ENCODE measurements at regions of chr6 and their contacts with region 1.

Region 1: DNA sequence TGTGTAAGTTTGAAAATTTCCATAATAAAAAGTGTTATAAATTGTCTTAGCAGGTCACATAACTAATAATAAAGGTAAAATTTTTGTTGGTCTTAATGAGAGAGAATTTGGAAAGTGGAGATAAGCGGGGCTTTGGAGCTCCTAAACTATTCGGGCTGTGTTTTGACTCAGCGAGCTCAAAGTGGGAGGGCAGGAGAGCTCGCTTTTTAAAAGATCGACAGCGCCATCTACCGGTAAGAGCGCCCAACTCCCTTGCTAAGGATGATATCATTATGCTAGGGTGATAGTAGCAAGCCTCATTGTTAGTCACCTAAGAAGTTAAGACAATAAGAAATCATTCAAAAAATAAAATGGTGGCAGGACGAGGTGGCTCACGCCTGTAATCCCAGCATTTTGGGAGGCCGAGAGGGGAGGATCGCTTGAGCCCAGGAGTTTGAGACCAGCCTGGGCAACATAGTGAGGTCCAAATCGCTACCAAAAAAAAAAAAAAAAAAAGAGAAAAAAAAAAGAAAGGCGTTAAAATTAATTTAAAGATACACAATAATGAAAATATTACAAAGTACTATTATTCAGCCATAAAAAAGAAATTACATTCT is 24.8 kb downstream of the C6orf15 start:
- DNase-seq: peak; percentile 25
- ATAC-seq: peak; percentile 98
- H3K4me3 ChIP-seq: no peak overlapping the region
- H3K27ac ChIP-seq: no peak overlapping the region
- H3K4me1 ChIP-seq: no peaks in the 10 kb centered on the region
- H3K27me3 ChIP-seq: no peaks in the 10 kb centered on the region; a peak in 1 of 4 replicates
- CTCF ChIP-seq: peak; percentile 67 to 72 (median 71)
- EP300 ChIP-seq: no peak
- POLR2A ChIP-seq: no peak
- RAD21 ChIP-seq: peak; percentile 71

Region 2: DNA sequence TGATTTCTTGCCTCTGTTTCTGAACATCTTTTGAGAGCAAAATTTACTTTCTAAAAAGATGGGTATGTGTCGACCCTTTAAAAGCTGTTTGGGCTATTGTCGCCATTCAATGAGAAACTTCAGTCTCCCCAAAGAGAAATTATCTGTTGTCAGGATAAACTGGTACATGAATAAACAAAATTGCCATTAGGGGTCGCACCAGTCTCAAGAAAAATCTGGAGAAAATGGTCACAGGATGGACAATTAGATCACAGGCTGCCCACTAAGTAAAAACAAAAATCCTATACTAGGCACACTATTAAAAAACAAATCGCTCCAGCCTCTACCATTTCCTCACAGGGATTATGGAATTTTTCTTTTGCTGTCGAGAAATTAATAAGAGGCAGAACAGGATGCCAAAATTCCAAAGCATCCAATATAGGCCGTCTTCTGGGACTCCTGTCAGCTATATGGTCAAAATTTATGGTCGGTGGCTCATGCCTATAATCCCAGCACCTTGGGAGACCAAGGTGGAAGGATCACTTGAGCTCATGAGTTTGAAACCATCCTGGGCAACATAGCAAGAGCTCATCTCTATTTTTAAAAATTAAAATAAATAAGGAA is 603.8 kb before region 1 on chr6:
- CTCF ChIA-PET with region 1: interaction called, 14 read pairs
- POLR2A ChIA-PET with region 1: no interaction called
- RAD21 ChIA-PET with region 1: interaction called, 9 read pairs
- SMC1A ChIA-PET with region 1: interaction called, 4 read pairs
- in situ Hi-C with region 1: no loop called
- intact Hi-C with region 1: loop called (anchors 10 kb)
- DNase-seq: peak; percentile 37
- ATAC-seq: peak; percentile 48
- H3K4me3 ChIP-seq: no peak overlapping the region
- H3K27ac ChIP-seq: no peak overlapping the region
- H3K4me1 ChIP-seq: peaks cover 12% of the 10 kb centered on the region; the same call in 1 of the 2 replicates
- H3K27me3 ChIP-seq: peaks cover 2 to 8% of the 10 kb centered on the region in 2 experiments; a peak in 3 of 4 replicates
- CTCF ChIP-seq: peak; percentile 47 to 73 (median 56); a peak in 5 of 6 replicates
- EP300 ChIP-seq: no peak
- POLR2A ChIP-seq: no peak
- RAD21 ChIP-seq: peak; percentile 90

Region 3: DNA sequence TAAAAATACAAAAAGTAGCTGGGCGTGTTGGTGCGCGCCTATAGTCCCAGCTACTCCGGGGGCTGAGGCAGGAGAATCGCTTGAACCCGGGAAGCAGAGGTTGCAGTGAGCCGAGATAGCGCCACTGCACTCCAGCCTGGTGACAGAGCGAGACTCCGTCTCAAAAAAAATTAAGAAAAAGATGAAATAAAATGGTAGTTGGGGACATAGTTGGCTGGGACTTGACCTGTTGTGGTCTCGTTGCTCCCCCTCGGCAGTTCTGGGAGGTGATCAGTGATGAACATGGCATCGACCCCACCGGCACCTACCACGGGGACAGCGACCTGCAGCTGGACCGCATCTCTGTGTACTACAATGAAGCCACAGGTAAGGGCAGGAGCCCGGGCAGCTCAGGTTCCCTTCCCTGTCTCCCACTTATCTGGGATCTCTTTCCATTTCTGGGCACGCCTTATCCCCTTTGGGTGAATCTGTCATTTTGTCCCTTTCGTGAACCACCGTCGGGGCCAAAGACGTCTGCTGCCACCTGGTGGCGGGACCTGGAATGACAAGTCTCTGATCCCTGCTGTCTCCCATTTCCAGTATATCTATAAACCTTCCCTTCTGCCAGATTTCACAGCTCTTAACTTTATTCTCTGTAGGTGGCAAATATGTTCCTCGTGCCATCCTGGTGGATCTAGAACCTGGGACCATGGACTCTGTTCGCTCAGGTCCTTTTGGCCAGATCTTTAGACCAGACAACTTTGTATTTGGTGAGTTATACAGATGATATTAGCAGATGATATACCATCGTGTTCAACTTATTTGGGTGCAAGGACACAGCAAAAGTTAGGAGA is 365.1 kb before region 1 on chr6:
- CTCF ChIA-PET with region 1: no interaction called
- POLR2A ChIA-PET with region 1: no interaction called
- RAD21 ChIA-PET with region 1: interaction called, 3 read pairs
- SMC1A ChIA-PET with region 1: interaction called, 3 read pairs
- in situ Hi-C with region 1: no loop called
- intact Hi-C with region 1: loop called (anchors 5 kb)
- DNase-seq: no peak
- ATAC-seq: 0 out of 3 replicates have a peak, but pooled peaks have one; percentile 0
- H3K4me3 ChIP-seq: peak overlapping the region; percentile 88
- H3K27ac ChIP-seq: peak overlapping the region; percentile 67
- H3K4me1 ChIP-seq: peaks cover 12% of the 10 kb centered on the region
- H3K27me3 ChIP-seq: no peaks in the 10 kb centered on the region
- CTCF ChIP-seq: peak; percentile 90 to 95 (median 92)
- EP300 ChIP-seq: no peak
- POLR2A ChIP-seq: no peak; the same call in 1 of the 2 replicates
- RAD21 ChIP-seq: peak; percentile 86

Region 4: DNA sequence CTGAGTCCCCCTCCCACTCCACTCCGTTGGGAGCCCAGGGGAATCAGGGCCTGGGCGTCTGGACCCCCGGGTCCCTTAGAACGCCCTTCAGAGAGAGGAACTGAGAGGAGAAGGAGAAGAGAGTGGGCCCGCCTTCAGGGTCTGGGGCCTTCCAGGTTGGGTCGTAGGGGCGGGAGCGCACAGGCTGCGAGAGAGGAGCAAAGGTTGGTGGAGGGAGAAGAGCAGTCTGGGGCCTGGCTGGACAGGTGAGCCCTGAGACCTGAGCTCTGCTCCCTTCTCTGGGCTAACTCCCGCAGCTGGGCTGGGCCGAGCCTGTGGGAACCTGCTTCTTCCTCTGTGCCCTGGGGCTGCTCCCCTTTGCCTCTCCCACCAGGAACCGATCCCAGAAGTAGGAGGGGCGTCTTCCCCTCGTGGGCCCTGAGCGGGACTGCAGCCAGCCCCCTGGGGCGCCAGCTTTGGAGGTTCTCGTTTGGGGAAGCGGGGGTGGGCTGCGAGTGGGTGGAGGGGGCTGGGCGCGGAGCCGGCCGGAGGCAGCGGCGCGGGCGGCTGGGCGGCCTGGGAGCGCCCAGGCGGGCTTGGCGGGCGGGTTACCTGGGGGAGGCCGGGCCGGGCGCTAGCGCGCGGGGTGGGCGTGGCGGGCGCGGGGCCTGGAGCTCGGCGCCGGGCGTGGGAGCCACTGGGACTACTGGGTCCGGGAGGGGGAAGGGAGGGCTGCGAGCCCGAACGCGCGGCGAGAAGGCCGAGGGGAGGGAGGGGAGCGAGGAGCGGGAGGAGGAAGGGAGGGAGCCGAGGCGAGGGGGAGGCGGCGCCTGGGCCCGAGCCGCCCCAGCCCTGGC is 203.7 kb before region 1 on chr6 and contains the start of gene DDR1:
- CTCF ChIA-PET with region 1: interaction called, 11 read pairs
- POLR2A ChIA-PET with region 1: no interaction called
- RAD21 ChIA-PET with region 1: interaction called, 5 read pairs
- SMC1A ChIA-PET with region 1: interaction called, 4 read pairs
- in situ Hi-C with region 1: no loop called
- intact Hi-C with region 1: no loop called
- DNase-seq: no peak
- ATAC-seq: peak; percentile 65
- H3K4me3 ChIP-seq: peak within 1 kb of the TSS; percentile 75
- H3K27ac ChIP-seq: peak within 1 kb of the TSS; percentile 81
- H3K4me1 ChIP-seq: peaks cover 38% of the 10 kb centered on the region
- H3K27me3 ChIP-seq: no peaks in the 10 kb centered on the region
- CTCF ChIP-seq: no peak
- EP300 ChIP-seq: no peak
- POLR2A ChIP-seq: peak; percentile 18; the same call in 1 of the 2 replicates
- RAD21 ChIP-seq: no peak
- polyA plus RNA-seq, gene DDR1: 1.1 to 2.2 TPM

Region 5: GRCh38 chr6:30997301-30997700 is 90.3 kb before region 1 on chr6:
- CTCF ChIA-PET with region 1: no interaction called
- POLR2A ChIA-PET with region 1: no interaction called
- RAD21 ChIA-PET with region 1: no interaction called
- SMC1A ChIA-PET with region 1: no interaction called
- in situ Hi-C with region 1: no loop called
- intact Hi-C with region 1: no loop called
- DNase-seq: no peak
- ATAC-seq: no peak
- H3K4me3 ChIP-seq: no peak overlapping the region
- H3K27ac ChIP-seq: no peak overlapping the region
- H3K4me1 ChIP-seq: no peaks in the 10 kb centered on the region
- H3K27me3 ChIP-seq: no peaks in the 10 kb centered on the region
- CTCF ChIP-seq: no peak
- EP300 ChIP-seq: no peak
- POLR2A ChIP-seq: no peak
- RAD21 ChIP-seq: no peak

Region 6: GRCh38 chr6:31068669-31069340 is 18.8 kb before region 1 on chr6:
- CTCF ChIA-PET with region 1: interaction called, 20 read pairs
- POLR2A ChIA-PET with region 1: no interaction called
- RAD21 ChIA-PET with region 1: interaction called, 9 read pairs
- SMC1A ChIA-PET with region 1: interaction called, 5 read pairs
- in situ Hi-C with region 1: no loop called
- intact Hi-C with region 1: no loop called
- DNase-seq: no peak
- ATAC-seq: peak; percentile 99
- H3K4me3 ChIP-seq: no peak overlapping the region
- H3K27ac ChIP-seq: no peak overlapping the region
- H3K4me1 ChIP-seq: no peaks in the 10 kb centered on the region; the same call in 1 of the 2 replicates
- H3K27me3 ChIP-seq: no peaks in the 10 kb centered on the region
- CTCF ChIP-seq: peak; percentile 89 to 93 (median 90); a peak in 5 of 6 replicates
- EP300 ChIP-seq: no peak
- POLR2A ChIP-seq: no peak
- RAD21 ChIP-seq: peak; percentile 76

Region 7: GRCh38 chr6:31128093-31128676 is 40.6 kb after region 1 on chr6:
- CTCF ChIA-PET with region 1: interaction called, 21 read pairs
- POLR2A ChIA-PET with region 1: interaction called, 4 read pairs
- RAD21 ChIA-PET with region 1: interaction called, 8 read pairs
- SMC1A ChIA-PET with region 1: interaction called, 8 read pairs
- in situ Hi-C with region 1: no loop called
- intact Hi-C with region 1: no loop called
- DNase-seq: peak; percentile 13
- ATAC-seq: peak; percentile 81
- H3K4me3 ChIP-seq: no peak overlapping the region
- H3K27ac ChIP-seq: no peak overlapping the region
- H3K4me1 ChIP-seq: no peaks in the 10 kb centered on the region; the same call in 1 of the 2 replicates
- H3K27me3 ChIP-seq: no peaks in the 10 kb centered on the region; a peak in 4 of 4 replicates
- CTCF ChIP-seq: peak; percentile 80 to 90 (median 82)
- EP300 ChIP-seq: no peak
- POLR2A ChIP-seq: no peak
- RAD21 ChIP-seq: peak; percentile 30; the same call in 1 of the 2 replicates